Sigmoid colon (tissue), 7 donors: ENCODE measurements at regions of chr10 and their contacts with region 1.

Region 1: DNA sequence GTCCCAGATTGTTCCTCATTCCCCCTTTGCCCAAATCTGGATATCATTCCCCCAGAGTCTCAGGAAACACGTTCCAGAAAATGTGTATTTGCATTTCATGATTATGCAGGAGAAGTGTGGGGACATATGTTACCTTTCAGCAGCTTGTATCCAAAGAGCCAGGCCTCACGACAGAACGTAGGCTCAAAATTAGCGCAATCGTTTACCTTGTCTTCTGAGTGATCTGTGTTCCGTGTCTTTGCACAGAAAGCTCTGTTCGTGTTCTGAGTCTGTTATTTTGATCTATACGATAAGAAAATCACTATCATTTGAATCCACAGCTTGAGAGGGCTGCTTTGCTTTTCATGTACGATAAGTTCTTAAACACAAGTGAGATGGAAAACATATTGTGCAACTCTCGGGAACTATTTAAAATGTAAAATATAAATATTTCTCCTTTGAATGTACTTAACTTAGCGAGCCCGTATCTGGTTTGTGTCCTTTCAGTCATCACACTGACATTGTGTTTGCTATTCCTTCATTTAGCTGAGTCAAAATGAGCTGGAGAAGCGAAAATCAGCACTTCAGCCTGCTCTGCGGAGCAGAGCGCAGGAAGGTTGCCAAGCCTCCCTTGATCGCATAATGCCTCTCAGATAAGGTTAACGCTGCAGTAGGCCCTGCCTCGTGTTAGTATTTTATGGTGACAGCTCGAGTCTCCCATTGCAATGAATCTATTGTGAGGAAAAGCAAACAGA is 80.2 kb upstream of the CACNB2 start:
- DNase-seq: peak; percentile 87
- H3K4me3 ChIP-seq: peak overlapping the region in 1 of 4 donors; percentile 10
- H3K27ac ChIP-seq: peak overlapping the region; percentile 57 to 79 (median 67)
- H3K4me1 ChIP-seq: peaks cover 0 to 17% (median 8%) of the 10 kb centered on the region in 4 donors
- H3K27me3 ChIP-seq: no peaks in the 10 kb centered on the region
- CTCF ChIP-seq: no peak
- EP300 ChIP-seq: no peak
- POLR2A ChIP-seq: no peak

Region 2: GRCh38 chr10:17923728-17924127 is 136.3 kb before region 1 on chr10:
- intact Hi-C with region 1: loop called (anchors 5 kb)
- DNase-seq: peak; percentile 83
- H3K4me3 ChIP-seq: no peak overlapping the region
- H3K27ac ChIP-seq: peak overlapping the region in 2 of 4 donors; percentile 63 to 66
- H3K4me1 ChIP-seq: peaks cover 0 to 22% (median 7%) of the 10 kb centered on the region in 4 donors
- H3K27me3 ChIP-seq: no peaks in the 10 kb centered on the region
- CTCF ChIP-seq: no peak
- EP300 ChIP-seq: no peak
- POLR2A ChIP-seq: no peak